Activated naive CD4-positive, alpha-beta T cell treated with anti-CD3 and anti-CD28 coated beads for 36 hours (primary cell): ENCODE measurements at regions of chr3 and their contacts with region 1.

Region 1: DNA sequence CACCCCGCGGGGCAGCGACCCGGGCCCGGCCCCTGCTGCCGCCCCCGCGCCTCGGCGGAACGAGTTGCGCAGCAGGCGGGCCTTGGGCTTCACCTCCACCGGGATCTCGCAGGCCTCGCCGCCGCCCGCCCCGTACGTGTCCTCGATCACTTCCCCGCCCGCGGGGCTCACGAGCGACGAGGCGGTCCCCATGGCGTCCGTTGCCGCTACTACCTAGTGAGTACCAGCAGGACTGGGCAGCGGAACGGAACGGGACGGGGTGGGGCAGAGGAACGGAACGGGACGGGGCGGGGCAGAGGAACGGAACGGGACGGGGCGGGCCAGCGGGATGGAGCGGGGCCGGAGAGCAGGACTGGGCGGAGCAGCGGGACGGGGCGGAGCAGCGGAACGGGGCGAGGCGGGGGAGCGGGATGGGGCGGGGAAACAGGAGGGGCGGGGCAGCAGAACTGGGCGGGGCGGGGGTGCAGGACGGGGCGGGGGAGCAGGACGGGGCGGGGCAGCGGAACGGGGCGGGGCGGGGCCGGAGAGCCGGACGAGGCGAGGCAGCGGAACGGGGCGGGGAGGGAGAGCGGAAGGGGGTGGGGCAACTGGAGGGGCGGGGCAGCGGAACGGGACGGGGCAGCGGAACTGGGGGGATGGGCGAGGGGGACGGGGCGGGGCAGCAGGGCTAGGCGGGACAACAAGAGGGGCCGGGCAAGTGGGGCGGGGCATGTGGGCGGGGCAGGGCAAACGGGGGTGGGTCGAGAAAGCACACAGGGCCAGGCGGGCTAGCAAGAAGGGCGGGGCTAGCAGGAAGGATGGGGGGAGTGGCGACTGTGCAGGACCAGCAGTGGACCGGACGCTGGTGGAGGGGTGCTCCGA is at the start of gene NPHP3:
- DNase-seq: peak; percentile 98
- H3K4me3 Mint-ChIP-seq: peak within 1 kb of the TSS; percentile 86
- H3K27ac Mint-ChIP-seq: peak within 1 kb of the TSS; percentile 73
- H3K4me1 Mint-ChIP-seq: peaks cover 34% of the 10 kb centered on the region
- H3K27me3 Mint-ChIP-seq: no peaks in the 10 kb centered on the region
- total RNA-seq, gene NPHP3: 11.4 to 11.6 TPM

Region 2: DNA sequence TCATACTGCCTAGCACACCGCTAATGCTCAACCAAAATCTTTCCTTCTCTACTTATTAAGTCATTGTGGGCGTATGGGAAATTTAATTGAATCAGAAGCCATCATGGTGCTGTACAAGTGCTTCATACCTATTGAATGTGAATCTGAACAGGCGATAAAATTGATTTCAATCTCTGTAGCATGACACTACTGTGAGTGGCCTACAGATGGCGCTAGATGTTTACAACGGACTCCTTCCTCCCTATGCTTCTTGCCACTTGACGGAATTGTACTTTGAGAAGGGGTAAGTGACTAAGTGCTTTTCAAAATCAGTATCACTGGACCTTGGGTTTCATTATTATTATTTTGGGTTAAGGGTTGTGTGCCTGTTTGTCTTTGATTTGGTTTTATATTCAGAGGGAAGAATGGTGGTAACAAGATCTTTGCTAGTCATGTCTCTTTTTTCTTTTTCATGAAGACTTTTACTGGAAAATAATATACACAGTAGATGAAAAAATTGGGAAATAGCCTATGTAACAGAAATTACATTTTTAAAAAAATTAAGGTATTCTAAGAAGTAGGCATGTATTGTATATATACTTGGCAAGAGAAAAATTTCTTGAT is 369.8 kb before region 1 on chr3:
- CTCF ChIA-PET with region 1: no interaction called
- intact Hi-C with region 1: loop called (anchors 5 kb)
- DNase-seq: peak; percentile 84
- H3K4me3 Mint-ChIP-seq: no peak overlapping the region
- H3K27ac Mint-ChIP-seq: no peak overlapping the region
- H3K4me1 Mint-ChIP-seq: peaks cover 2% of the 10 kb centered on the region
- H3K27me3 Mint-ChIP-seq: no peaks in the 10 kb centered on the region

Region 3: GRCh38 chr3:132595014-132595413 is 127.4 kb before region 1 on chr3:
- CTCF ChIA-PET with region 1: no interaction called
- intact Hi-C with region 1: no loop called
- DNase-seq: no peak
- H3K4me3 Mint-ChIP-seq: no peak overlapping the region
- H3K27ac Mint-ChIP-seq: no peak overlapping the region
- H3K4me1 Mint-ChIP-seq: peaks cover 3% of the 10 kb centered on the region
- H3K27me3 Mint-ChIP-seq: no peaks in the 10 kb centered on the region

Region 4: DNA sequence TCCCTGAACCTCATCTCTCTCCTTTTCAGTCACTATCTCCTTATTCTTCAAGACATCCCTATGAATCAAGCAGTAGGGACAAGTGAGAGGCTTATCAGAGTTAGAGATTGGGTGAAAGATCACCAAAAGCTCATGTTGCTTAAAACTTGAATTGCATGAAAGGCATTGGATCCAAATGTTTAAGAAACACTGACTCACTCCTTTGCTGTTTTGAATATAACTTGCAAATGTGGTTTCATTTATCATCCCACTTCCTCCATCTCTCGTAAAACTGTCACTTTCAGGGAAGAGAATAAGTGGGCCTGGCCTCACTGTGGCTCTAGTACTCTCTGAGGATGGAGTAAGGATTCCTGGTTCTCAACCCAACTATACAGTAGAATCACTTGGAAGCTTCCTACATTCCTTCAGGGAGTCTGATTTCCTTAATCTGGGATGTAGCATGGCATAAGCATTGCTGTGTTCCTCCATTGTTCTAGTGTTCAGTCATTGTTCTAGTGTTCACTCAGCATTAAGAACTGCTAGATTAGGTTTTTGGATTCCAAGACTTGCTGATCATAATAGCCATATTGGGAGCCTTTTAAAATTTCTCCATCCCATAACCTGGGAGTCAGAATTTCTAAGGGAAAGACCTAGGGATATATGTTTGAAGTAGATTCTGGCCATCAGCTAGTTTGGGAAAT is 487.6 kb after region 1 on chr3:
- CTCF ChIA-PET with region 1: interaction called, 3 read pairs
- intact Hi-C with region 1: loop called (anchors 10 kb)
- DNase-seq: peak; percentile 13
- H3K4me3 Mint-ChIP-seq: no peak overlapping the region
- H3K27ac Mint-ChIP-seq: no peak overlapping the region
- H3K4me1 Mint-ChIP-seq: peaks cover 20% of the 10 kb centered on the region
- H3K27me3 Mint-ChIP-seq: peaks cover 11% of the 10 kb centered on the region

Region 5: GRCh38 chr3:133426721-133427120 is 704.3 kb after region 1 on chr3:
- CTCF ChIA-PET with region 1: interaction called, 21 read pairs
- intact Hi-C with region 1: loop called (anchors 1 kb)
- DNase-seq: no peak
- H3K4me3 Mint-ChIP-seq: no peak overlapping the region
- H3K27ac Mint-ChIP-seq: no peak overlapping the region
- H3K4me1 Mint-ChIP-seq: peaks cover 4% of the 10 kb centered on the region
- H3K27me3 Mint-ChIP-seq: no peaks in the 10 kb centered on the region

Region 6: GRCh38 chr3:133573054-133573628 is 850.7 kb after region 1 on chr3:
- CTCF ChIA-PET with region 1: interaction called, 3 read pairs
- intact Hi-C with region 1: loop called (anchors 1 kb)
- DNase-seq: peak; percentile 100
- H3K4me3 Mint-ChIP-seq: peak overlapping the region; percentile 87
- H3K27ac Mint-ChIP-seq: peak overlapping the region; percentile 100
- H3K4me1 Mint-ChIP-seq: peaks cover 43% of the 10 kb centered on the region
- H3K27me3 Mint-ChIP-seq: no peaks in the 10 kb centered on the region

Region 7: GRCh38 chr3:133927540-133928066 is 1205.2 kb after region 1 on chr3:
- CTCF ChIA-PET with region 1: interaction called, 3 read pairs
- intact Hi-C with region 1: loop called (anchors 5 kb)
- DNase-seq: peak; percentile 60
- H3K4me3 Mint-ChIP-seq: no peak overlapping the region
- H3K27ac Mint-ChIP-seq: no peak overlapping the region
- H3K4me1 Mint-ChIP-seq: peaks cover 6% of the 10 kb centered on the region
- H3K27me3 Mint-ChIP-seq: peaks cover 2% of the 10 kb centered on the region